ENCODE measurements at regions of chr16 and their contacts with region 1.

Region 1: DNA sequence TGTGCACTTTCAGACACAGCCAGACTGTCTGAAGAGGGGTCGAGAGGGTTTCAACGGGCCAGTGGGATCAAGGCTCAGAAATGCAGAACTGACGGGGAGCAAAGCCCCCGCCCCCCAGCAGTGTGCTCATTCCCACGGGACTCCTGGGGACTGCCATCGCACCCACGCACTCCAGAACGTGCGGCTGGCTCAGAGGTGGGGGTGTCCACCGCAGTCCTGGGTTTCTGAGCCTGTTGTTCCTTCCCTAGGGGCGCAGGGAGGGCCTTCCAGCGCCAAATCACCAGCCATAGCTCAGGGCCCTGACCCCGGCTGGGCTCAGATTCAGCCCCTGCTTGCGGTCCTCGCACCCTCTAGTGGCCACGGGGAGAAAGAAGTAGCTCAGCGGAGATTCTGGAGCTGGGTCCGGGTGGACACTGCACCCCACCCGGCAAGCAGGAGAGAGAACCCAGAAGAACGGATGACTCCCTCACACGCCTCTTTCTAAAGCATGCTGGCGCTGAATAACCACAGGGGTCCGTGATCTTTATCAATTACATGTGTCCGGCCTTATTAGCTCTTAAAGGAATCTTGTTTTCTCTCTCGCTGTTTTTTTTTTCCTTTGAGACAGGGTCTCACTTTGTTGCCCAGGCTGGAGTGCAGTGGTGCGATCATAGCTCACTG is 45.0 kb upstream of the USP7 start:
- DNase-seq: peak; percentile 42
- H3K4me3 Mint-ChIP-seq: no peak overlapping the region
- H3K27ac Mint-ChIP-seq: no peak overlapping the region
- H3K4me1 Mint-ChIP-seq: no peaks in the 10 kb centered on the region
- H3K27me3 Mint-ChIP-seq: peaks cover 8% of the 10 kb centered on the region

Region 2: DNA sequence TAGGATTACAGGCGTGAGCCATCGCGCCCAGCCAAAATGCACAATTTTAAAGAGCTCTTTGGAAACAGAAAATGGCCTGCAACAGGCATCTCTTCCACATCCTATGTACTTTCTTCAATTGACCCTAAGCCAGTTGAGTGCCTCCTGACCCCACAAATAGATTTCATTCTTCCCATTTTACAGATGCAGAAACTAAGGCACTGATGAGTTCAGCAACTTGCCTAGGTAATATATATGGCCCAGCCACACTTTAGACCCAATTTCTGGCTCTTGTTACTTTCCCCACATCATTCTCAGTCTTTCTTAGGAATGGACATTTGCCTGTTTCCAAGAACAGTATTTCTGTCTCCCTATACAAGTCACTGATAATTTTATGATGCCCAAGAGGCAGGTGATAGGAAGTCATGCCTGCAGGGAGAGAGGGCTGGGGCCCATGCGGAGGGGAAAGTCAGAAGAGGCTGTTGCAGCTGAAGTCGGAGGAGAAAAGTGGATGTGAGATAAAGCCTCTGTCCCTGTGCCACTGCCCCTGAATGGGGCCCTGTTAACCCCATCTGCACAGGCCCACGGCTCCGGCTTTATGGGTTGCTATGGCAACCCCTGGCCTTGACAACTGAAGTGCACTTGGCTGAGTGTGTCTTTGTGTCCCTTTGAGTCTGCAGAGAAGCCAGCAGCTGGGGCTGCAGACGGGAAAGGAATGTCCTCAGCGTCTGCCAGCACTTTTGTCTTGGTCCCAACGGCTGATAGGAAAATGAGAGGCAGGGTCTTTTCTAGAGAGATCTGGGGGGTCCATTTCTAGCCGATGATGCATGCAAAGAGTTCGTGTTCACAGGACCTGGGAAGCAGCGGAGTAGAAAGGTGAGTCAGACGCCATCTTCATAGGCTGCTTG is 288.4 kb before region 1 on chr16:
- intact Hi-C with region 1: no loop called
- DNase-seq: no peak
- H3K4me3 Mint-ChIP-seq: no peak overlapping the region
- H3K27ac Mint-ChIP-seq: no peak overlapping the region
- H3K4me1 Mint-ChIP-seq: no peaks in the 10 kb centered on the region
- H3K27me3 Mint-ChIP-seq: no peaks in the 10 kb centered on the region

Region 3: GRCh38 chr16:8905168-8905762 is 103.5 kb before region 1 on chr16:
- intact Hi-C with region 1: loop called (anchors 1 kb)
- DNase-seq: no peak
- H3K4me3 Mint-ChIP-seq: no peak overlapping the region
- H3K27ac Mint-ChIP-seq: no peak overlapping the region
- H3K4me1 Mint-ChIP-seq: peaks cover 24% of the 10 kb centered on the region
- H3K27me3 Mint-ChIP-seq: no peaks in the 10 kb centered on the region

Region 4: DNA sequence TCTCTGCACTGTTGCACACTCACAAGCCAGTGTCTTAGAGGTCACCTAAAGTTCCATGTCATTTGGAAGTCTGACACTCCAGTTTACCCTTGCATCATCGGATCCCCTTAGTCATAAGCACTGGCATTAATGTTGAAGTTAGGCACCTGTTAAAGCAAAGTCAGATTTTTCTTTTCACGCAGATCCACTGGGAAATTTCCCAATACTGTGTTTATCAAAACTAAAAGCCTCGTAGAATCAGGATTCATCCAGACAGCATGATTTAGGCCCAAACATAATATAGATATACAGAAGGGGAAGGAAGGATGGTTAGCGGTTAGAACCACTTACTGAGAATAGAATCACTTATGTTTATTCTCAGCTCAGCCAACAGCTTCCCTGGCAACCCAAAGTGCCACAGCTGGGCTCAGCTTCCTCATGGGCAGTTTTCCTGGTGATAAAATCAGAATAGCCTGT is 52.7 kb after region 1 on chr16:
- intact Hi-C with region 1: no loop called
- DNase-seq: no peak
- H3K4me3 Mint-ChIP-seq: no peak overlapping the region
- H3K27ac Mint-ChIP-seq: no peak overlapping the region
- H3K4me1 Mint-ChIP-seq: peaks cover 14% of the 10 kb centered on the region
- H3K27me3 Mint-ChIP-seq: no peaks in the 10 kb centered on the region